Motor neuron (in vitro differentiated cells): ENCODE measurements at regions of chr4 and their contacts with region 1.

Region 1: DNA sequence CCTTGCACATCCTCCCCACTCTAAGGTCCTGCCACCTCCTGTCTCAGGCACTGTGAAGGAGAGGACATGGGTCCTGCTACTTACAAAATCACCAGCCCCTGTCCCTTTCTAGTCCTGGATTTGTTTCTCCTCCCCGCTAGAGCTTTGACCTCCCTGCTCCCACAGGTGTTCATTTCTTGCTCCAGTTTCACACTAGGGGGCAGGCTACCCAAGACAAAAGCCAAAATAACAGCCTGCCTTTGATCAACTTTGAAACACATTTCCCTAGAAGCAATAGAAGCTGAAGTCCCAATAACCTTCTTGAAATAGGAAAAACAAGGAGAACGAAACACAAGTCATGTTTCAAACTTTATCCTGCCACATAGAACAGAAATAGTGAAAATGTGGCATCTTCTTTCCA is 164.4 kb downstream of the QDPR start:
- ATAC-seq: peak in 3 of 8 experiments; percentile 54 to 74 (median 69)
- H3K4me3 ChIP-seq: no peak overlapping the region
- H3K27ac ChIP-seq: no peak overlapping the region
- H3K4me1 ChIP-seq: no peaks in the 10 kb centered on the region

Region 2: GRCh38 chr4:16794816-16795445 is 552.5 kb before region 1 on chr4:
- in situ Hi-C with region 1: loop called in 2 of 9 experiments (anchors 25 kb)
- ATAC-seq: peak; percentile 31 to 86 (median 64)
- H3K4me3 ChIP-seq: no peak overlapping the region
- H3K27ac ChIP-seq: no peak overlapping the region
- H3K4me1 ChIP-seq: peaks cover 0 to 4% of the 10 kb centered on the region in 2 donors

Region 3: GRCh38 chr4:16916719-16917337 is 430.6 kb before region 1 on chr4:
- in situ Hi-C with region 1: loop called in 2 of 9 experiments (anchors 25 kb)
- ATAC-seq: peak in 1 of 8 experiments; percentile 31
- H3K4me3 ChIP-seq: no peak overlapping the region
- H3K27ac ChIP-seq: no peak overlapping the region
- H3K4me1 ChIP-seq: peaks cover 0 to 5% of the 10 kb centered on the region in 2 donors

Region 4: DNA sequence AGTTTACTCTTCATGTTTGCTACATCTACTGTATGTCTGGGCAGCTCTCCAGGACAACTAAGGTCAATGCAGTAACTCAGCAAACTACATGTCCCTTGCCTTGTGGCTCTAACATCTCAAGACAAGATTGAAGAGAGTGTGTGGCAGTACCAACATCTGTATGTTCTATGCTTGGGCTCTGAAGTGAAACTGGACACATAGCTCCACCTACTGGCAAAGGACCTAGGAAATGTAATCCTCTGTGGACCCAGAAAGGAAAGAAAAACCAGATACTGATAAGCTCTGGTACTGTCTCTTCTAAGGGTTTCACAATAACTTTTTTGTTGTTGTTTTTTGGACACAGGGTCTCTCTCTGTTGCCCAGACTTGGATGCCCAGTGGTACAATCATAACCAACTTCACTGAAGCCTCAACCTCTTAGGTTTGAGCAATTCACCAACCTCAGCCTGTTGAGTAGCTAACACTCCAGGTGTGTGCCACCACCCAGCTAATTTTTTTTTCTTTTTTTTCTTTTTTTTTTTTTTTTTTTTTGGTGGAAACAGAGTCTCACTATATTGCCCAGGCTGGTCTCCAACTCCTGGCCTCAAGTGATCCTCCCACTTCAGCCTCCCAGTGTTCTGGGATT is 100.3 kb after region 1 on chr4:
- in situ Hi-C with region 1: loop called in 2 of 9 experiments (anchors 5 to 25 kb)
- ATAC-seq: peak; percentile 41 to 97 (median 74)
- H3K4me3 ChIP-seq: no peak overlapping the region
- H3K27ac ChIP-seq: no peak overlapping the region
- H3K4me1 ChIP-seq: peaks cover 0 to 5% of the 10 kb centered on the region in 2 donors

Region 5: GRCh38 chr4:17468371-17469221 is 121.2 kb after region 1 on chr4:
- in situ Hi-C with region 1: loop called in 2 of 9 experiments (anchors 10 to 25 kb)
- ATAC-seq: no peak
- H3K4me3 ChIP-seq: no peak overlapping the region
- H3K27ac ChIP-seq: no peak overlapping the region
- H3K4me1 ChIP-seq: peaks cover 0 to 3% of the 10 kb centered on the region in 2 donors